ENCODE measurements at regions of chr1 and their contacts with region 1.

Region 1: GRCh38 chr1:19209990-19210771 is at the start of gene UBR4:
- DNase-seq: peak; percentile 98
- H3K4me3 Mint-ChIP-seq: peak within 1 kb of the TSS; percentile 94
- H3K27ac Mint-ChIP-seq: peak within 1 kb of the TSS; percentile 96
- H3K4me1 Mint-ChIP-seq: peaks cover 68% of the 10 kb centered on the region
- H3K27me3 Mint-ChIP-seq: no peaks in the 10 kb centered on the region
- total RNA-seq, gene UBR4: 104 to 116 TPM

Region 2: GRCh38 chr1:18956369-18957135 is 253.6 kb before region 1 on chr1 and contains the start of gene IFFO2:
- CTCF ChIA-PET with region 1: no interaction called
- POLR2A ChIA-PET with region 1: no interaction called
- intact Hi-C with region 1: loop called (anchors 2 kb)
- DNase-seq: peak; percentile 98
- H3K4me3 Mint-ChIP-seq: peak within 1 kb of the TSS; percentile 84
- H3K27ac Mint-ChIP-seq: peak within 1 kb of the TSS; percentile 71
- H3K4me1 Mint-ChIP-seq: peaks cover 44% of the 10 kb centered on the region
- H3K27me3 Mint-ChIP-seq: peaks cover 2% of the 10 kb centered on the region
- total RNA-seq, gene IFFO2: 40.4 to 42.0 TPM

Region 3: GRCh38 chr1:19186001-19186400 is 24.2 kb before region 1 on chr1:
- CTCF ChIA-PET with region 1: interaction called, 6 read pairs
- POLR2A ChIA-PET with region 1: interaction called, 3 read pairs
- intact Hi-C with region 1: loop called (anchors 1 kb)
- DNase-seq: peak; percentile 13
- H3K4me3 Mint-ChIP-seq: no peak overlapping the region
- H3K27ac Mint-ChIP-seq: peak overlapping the region; percentile 57
- H3K4me1 Mint-ChIP-seq: peaks cover 23% of the 10 kb centered on the region
- H3K27me3 Mint-ChIP-seq: no peaks in the 10 kb centered on the region

Region 4: DNA sequence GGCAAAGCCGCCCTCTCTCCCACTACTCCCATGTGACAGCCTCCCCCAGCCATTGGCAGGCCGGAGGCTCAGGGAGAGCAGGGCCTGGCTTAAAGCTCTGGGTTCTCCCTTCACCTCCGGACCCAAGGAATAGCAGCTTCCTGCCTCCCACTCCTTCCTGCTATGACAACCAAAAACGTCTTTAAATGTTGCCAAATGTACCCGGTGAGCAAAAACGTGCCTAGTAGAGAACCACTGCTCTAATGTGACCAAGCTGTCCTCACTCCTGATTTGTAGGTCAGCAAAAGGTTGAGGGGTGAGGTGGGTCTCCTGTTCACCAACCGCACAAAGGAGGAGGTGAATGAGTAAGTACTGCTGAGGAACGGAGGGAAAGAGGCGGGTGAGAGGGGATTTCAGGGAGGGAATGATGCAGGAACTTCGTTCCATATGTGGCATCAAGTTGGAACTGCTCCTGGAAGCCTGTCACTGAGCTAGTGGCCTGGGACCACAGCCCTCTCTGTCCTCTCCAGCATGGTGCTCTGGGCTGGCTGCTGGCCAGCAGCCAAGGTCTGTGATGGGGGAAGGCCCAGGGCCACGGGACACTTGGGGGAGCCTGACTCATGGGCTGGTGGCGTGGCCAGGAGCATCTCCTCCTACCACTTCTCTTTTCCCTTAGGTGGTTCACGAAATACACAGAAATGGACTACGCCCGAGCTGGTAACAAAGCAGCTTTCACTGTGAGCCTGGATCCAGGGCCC is 47.2 kb after region 1 on chr1:
- CTCF ChIA-PET with region 1: no interaction called
- POLR2A ChIA-PET with region 1: interaction called, 19 read pairs
- intact Hi-C with region 1: loop called (anchors 2 kb)
- DNase-seq: peak; percentile 80
- H3K4me3 Mint-ChIP-seq: peak overlapping the region; percentile 40
- H3K27ac Mint-ChIP-seq: peak overlapping the region; percentile 96
- H3K4me1 Mint-ChIP-seq: peaks cover 51% of the 10 kb centered on the region
- H3K27me3 Mint-ChIP-seq: no peaks in the 10 kb centered on the region

Region 5: GRCh38 chr1:19715334-19716203 is 505.4 kb after region 1 on chr1:
- CTCF ChIA-PET with region 1: no interaction called
- POLR2A ChIA-PET with region 1: no interaction called
- intact Hi-C with region 1: loop called (anchors 5 kb)
- DNase-seq: peak; percentile 93
- H3K4me3 Mint-ChIP-seq: no peak overlapping the region
- H3K27ac Mint-ChIP-seq: no peak overlapping the region
- H3K4me1 Mint-ChIP-seq: peaks cover 28% of the 10 kb centered on the region
- H3K27me3 Mint-ChIP-seq: no peaks in the 10 kb centered on the region